HCT116 (cell line): ENCODE measurements at regions of chr17 and their contacts with region 1.

Region 1: DNA sequence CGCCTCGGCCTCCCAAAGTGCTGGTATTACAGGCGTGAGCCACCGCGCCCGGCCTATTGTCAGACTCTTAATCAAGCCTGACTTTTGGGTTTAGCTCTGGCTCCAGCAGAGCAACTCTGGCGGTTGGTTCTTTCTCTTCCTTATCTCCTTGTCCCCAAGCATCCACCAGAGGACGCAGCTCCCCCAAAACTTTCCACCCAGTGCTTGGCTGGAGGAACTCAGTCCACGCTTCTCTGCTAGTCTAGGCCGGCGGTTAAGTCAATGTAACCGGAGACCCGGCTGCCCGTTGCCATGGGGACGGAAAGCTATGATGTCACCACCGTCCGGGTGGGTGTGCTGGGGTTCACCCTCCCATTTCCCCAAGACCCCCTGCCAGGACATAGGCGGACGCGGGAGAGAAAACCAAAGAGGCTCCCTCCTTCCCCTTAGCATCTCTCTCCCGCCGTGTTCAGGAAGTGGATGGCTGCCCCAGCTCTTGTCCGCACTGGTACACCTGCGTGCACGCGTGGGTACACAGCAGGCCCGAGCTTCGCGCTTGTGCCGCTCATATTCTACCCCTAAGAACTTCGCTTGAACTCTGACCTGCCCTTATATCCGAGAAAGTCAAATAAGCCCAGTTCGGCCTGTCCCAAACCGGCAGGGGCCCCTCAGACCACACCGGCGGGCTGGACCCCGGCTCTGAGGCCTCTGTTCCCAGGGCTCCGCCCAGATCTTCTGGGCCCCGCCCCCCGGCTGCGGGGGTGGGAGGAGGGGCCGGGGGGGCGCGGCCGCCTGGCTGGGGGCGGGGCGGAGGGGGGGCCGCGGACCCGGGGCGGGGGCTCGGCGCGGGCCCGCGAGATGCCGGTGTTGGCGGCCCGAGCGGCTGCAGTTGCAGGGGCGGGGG is at the start of gene RND2:
- DNase-seq: peak; percentile 91
- ATAC-seq: peak; percentile 72
- H3K4me3 ChIP-seq: peak within 1 kb of the TSS; percentile 45 to 61
- H3K27ac ChIP-seq: peak within 1 kb of the TSS; percentile 63
- H3K4me1 ChIP-seq: peaks cover 9 to 38% of the 10 kb centered on the region in 2 experiments; a peak in 3 of 4 replicates
- H3K27me3 ChIP-seq: no peaks in the 10 kb centered on the region
- CTCF ChIP-seq: peak in 2 of 3 experiments; percentile 63 to 75; a peak in 5 of 6 replicates
- POLR2A ChIP-seq: no peak
- RAD21 ChIP-seq: peak; percentile 87
- total RNA-seq, gene RND2: 0.66 TPM

Region 2: DNA sequence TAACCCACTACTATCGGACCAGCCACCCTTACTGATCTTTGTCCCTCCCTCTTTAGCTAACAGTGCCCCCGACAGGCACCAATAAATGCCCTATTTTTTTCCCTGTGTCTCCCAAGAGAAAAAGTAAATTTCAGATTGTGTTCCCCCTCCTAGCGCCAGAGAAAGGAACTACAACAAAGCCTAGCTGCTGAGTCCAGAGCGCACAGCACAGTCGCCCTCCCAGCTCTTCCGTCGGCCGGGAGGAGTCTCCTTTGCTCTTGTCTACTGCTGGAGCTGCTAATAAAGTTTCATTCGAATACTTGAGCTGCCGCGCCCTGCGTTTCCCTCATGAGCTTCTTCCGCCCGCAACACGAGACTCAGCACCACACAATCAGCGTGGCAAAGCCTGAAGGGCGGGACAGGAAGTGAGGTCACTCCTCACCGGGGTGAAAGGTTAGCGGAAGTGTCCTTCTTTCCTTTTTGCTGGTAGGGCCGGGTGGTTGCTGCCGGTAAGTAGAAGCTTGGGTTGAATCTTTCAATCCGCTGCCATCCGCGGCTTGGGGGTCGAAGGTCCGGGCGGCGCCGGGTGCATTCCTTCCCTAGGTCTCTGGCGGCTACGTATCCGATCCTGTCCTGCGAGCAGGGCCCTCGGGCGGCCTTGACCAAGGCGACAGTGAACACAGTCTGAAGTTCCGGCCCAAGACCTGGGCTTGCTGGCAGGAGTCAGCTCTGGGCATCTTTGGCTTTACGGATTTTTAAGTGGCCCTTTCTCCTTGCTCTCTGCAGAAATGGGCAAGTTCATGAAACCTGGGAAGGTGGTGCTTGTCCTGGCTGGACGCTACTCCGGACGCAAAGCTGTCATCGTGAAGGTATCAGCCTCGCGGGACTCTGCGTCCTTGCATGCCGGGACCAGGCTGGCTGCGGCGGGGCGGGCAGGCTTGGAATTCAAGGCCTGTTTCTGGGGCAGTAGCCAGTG is 26.4 kb before region 1 on chr17 and contains the start of gene RPL27:
- CTCF ChIA-PET with region 1: interaction called, 12 read pairs
- POLR2A ChIA-PET with region 1: interaction called, 21 read pairs
- RAD21 ChIA-PET with region 1: interaction called in 1 of 2 experiments, 3 read pairs
- intact Hi-C with region 1: no loop called
- DNase-seq: peak; percentile 100
- ATAC-seq: peak; percentile 90
- H3K4me3 ChIP-seq: peak within 1 kb of the TSS; percentile 97 to 99
- H3K27ac ChIP-seq: peak within 1 kb of the TSS; percentile 92
- H3K4me1 ChIP-seq: peaks cover 13 to 48% of the 10 kb centered on the region in 2 experiments
- H3K27me3 ChIP-seq: no peaks in the 10 kb centered on the region
- CTCF ChIP-seq: peak; percentile 77 to 96 (median 79)
- POLR2A ChIP-seq: peak; percentile 78
- RAD21 ChIP-seq: peak; percentile 84
- total RNA-seq, gene RPL27: 1,295 TPM

Region 3: GRCh38 chr17:43125133-43125966 is 100.7 kb after region 1 on chr17 and contains the start of gene BRCA1:
- CTCF ChIA-PET with region 1: interaction called, 3 read pairs
- POLR2A ChIA-PET with region 1: interaction called, 5 read pairs
- RAD21 ChIA-PET with region 1: no interaction called
- intact Hi-C with region 1: loop called (anchors 2 kb)
- DNase-seq: peak; percentile 99
- ATAC-seq: peak; percentile 96
- H3K4me3 ChIP-seq: peak within 1 kb of the TSS; percentile 93 to 98
- H3K27ac ChIP-seq: peak within 1 kb of the TSS; percentile 65
- H3K4me1 ChIP-seq: peaks cover 8 to 20% of the 10 kb centered on the region in 2 experiments; a peak in 3 of 4 replicates
- H3K27me3 ChIP-seq: no peaks in the 10 kb centered on the region
- CTCF ChIP-seq: no peak
- POLR2A ChIP-seq: peak; percentile 64
- RAD21 ChIP-seq: no peak
- total RNA-seq, gene BRCA1: 44.1 TPM

Region 4: DNA sequence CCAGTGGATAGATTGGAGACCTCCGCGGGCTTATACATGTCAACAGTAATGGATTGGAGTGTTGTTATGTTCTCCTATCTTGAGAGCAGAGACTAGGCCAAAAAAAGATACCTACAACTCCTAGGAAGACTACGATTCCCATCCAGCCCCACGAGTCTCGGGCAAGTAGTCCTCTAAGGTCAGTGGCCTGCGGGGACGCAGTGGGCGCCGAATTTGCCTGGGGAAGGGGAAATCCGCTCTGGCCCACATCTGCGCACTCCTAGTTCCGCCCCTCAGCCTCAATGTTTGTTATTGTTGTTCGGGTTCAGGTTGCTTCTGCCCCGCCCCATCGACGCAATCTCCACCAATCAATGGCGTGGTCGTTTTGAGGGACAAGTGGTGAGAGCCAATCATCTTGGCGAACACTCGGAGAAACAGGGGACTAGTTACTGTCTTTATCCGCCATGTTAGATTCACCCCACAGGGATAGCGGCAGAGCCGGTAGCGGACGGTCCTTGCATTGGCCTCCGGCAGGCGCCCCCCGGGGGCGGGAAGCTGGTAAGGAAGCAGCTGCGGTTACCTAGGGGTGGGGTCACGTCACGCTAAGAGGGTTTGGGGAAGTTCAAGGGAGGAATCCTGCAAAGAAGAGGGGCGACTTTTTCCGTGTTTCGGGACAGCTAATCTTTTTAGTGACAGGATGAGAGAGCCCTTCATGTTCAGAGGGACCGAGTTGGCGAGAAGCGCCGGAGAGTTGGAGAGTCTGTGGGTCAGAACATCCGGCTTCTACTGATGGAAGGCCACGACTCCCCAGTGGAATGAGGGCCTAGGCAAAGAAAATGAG is 146.3 kb after region 1 on chr17 and contains the start of gene NBR1:
- CTCF ChIA-PET with region 1: interaction called, 6 read pairs
- POLR2A ChIA-PET with region 1: interaction called, 7 read pairs
- RAD21 ChIA-PET with region 1: no interaction called
- intact Hi-C with region 1: loop called (anchors 2 kb)
- DNase-seq: peak; percentile 99
- ATAC-seq: peak; percentile 76
- H3K4me3 ChIP-seq: peak within 1 kb of the TSS; percentile 76 to 98
- H3K27ac ChIP-seq: peak within 1 kb of the TSS; percentile 72
- H3K4me1 ChIP-seq: peaks cover 8 to 23% of the 10 kb centered on the region in 2 experiments
- H3K27me3 ChIP-seq: no peaks in the 10 kb centered on the region
- CTCF ChIP-seq: 0 out of 6 replicates have a peak, but pooled peaks of 1 of the 3 experiments have one; percentile 16
- POLR2A ChIP-seq: peak; percentile 65
- RAD21 ChIP-seq: peak; percentile 26
- total RNA-seq, gene NBR1: 60.8 TPM

Region 5: GRCh38 chr17:43388359-43389045 is 363.9 kb after region 1 on chr17:
- CTCF ChIA-PET with region 1: interaction called, 4 read pairs
- POLR2A ChIA-PET with region 1: interaction called, 3 read pairs
- RAD21 ChIA-PET with region 1: no interaction called
- intact Hi-C with region 1: loop called (anchors 5 kb)
- DNase-seq: peak; percentile 86
- ATAC-seq: peak; percentile 86
- H3K4me3 ChIP-seq: peak overlapping the region; percentile 45 to 69
- H3K27ac ChIP-seq: peak overlapping the region; percentile 68
- H3K4me1 ChIP-seq: peaks cover 5 to 25% of the 10 kb centered on the region in 2 experiments; a peak in 3 of 4 replicates
- H3K27me3 ChIP-seq: no peaks in the 10 kb centered on the region
- CTCF ChIP-seq: no peak
- POLR2A ChIP-seq: peak; percentile 62
- RAD21 ChIP-seq: no peak